Calu3 (cell line): ENCODE measurements at regions of chr19 and their contacts with region 1.

Region 1: DNA sequence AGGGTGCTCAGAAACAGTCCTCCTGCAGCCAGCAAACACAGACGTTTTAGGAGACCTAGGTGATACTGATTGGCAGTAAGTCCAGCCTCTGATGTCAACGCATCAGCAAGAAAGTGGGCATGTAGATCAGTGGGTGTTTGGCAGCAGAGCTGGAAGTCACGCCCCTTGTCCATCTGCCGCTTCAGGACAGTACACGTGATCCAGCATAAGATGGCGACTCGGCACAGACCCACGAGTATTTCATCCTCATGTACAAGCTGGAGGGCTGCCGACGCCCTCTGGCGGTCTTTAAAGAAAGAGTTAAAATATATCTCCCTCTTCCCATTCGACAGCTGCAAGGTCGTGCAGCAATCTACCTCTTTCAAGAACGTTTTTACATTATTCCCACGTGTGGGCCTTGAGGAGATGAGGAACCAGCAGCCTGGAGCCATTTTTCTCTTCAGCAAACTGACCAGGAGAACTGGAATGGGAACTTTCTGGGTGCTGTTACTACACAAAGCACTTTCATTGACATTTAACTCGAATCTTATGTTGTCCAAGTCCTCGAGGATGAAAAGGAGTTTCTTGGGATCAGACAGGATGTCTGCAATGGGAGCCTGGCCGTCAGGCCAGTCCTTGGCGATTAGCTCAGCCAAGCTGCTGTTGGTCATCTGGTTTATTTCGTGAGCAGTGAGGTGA is 22.3 kb downstream of the NLRP11 start:
- DNase-seq: peak; percentile 56
- H3K4me3 Mint-ChIP-seq: no peak overlapping the region
- H3K27ac Mint-ChIP-seq: no peak overlapping the region
- H3K4me1 Mint-ChIP-seq: no peaks in the 10 kb centered on the region
- H3K27me3 Mint-ChIP-seq: peaks cover 9% of the 10 kb centered on the region
- CTCF ChIP-seq: no peak

Region 2: DNA sequence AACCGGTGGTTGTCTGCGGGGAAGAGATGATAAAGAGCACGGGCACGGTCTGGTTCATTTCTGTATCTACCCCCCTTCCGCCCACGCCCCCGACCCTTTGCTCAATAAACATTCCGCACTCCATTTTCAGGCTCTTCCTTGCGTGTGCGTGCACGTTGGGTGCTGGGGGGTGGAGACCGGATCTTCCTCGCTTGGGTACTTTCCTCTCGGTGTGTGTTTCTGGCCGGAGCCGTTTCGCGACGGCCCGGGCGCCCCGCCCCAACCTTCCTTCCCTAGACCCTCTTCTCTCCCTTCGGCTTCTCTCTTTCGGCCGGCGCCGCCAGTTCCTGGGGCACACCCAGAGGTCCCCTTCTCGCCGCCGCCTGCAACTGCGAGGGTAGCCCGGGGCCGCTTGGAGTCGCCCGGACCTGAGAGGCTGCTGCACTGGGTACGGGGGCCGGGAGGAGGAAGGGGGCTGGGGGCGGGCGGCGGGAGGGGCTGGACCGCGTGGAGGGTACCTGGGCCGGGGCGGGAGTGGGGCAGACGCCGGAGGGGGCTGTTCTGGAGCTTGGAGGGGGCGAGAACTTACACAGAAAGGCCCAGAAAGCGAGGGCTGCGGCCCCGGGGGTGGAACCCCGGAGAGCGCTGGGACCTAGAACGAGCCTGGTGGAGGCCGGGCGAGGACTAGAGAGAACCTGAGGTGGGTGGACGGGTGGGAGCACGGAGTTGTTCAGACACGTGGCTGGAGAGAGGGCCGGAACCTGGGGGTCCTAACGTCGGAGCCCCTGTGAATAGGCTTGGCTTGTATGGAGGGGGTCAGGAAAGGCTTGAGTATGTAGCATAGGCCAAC is 166.0 kb before region 1 on chr19 and contains the start of gene ZNF581:
- CTCF ChIA-PET with region 1: no interaction called
- intact Hi-C with region 1: no loop called
- DNase-seq: peak; percentile 85
- H3K4me3 Mint-ChIP-seq: peak within 1 kb of the TSS; percentile 92
- H3K27ac Mint-ChIP-seq: peak within 1 kb of the TSS; percentile 73
- H3K4me1 Mint-ChIP-seq: peaks cover 34% of the 10 kb centered on the region
- H3K27me3 Mint-ChIP-seq: no peaks in the 10 kb centered on the region
- CTCF ChIP-seq: no peak
- total RNA-seq, gene ZNF581: 33.0 and 33.1 TPM in 2 replicates

Region 3: GRCh38 chr19:55653758-55654539 is 155.6 kb before region 1 on chr19:
- CTCF ChIA-PET with region 1: interaction called, 3 read pairs
- intact Hi-C with region 1: loop called (anchors 10 kb)
- DNase-seq: peak; percentile 99
- H3K4me3 Mint-ChIP-seq: peak overlapping the region; percentile 96
- H3K27ac Mint-ChIP-seq: peak overlapping the region; percentile 96
- H3K4me1 Mint-ChIP-seq: peaks cover 10% of the 10 kb centered on the region
- H3K27me3 Mint-ChIP-seq: no peaks in the 10 kb centered on the region
- CTCF ChIP-seq: peak; percentile 100

Region 4: GRCh38 chr19:55688422-55689246 is 120.9 kb before region 1 on chr19:
- CTCF ChIA-PET with region 1: no interaction called
- intact Hi-C with region 1: loop called (anchors 10 kb)
- DNase-seq: no peak
- H3K4me3 Mint-ChIP-seq: no peak overlapping the region
- H3K27ac Mint-ChIP-seq: no peak overlapping the region
- H3K4me1 Mint-ChIP-seq: peaks cover 44% of the 10 kb centered on the region
- H3K27me3 Mint-ChIP-seq: no peaks in the 10 kb centered on the region
- CTCF ChIP-seq: no peak

Region 5: GRCh38 chr19:55795021-55795420 is 14.5 kb before region 1 on chr19:
- CTCF ChIA-PET with region 1: no interaction called
- intact Hi-C with region 1: no loop called
- DNase-seq: no peak
- H3K4me3 Mint-ChIP-seq: no peak overlapping the region
- H3K27ac Mint-ChIP-seq: no peak overlapping the region
- H3K4me1 Mint-ChIP-seq: no peaks in the 10 kb centered on the region
- H3K27me3 Mint-ChIP-seq: no peaks in the 10 kb centered on the region
- CTCF ChIP-seq: no peak

Region 6: GRCh38 chr19:55857149-55857548 is 47.6 kb after region 1 on chr19:
- CTCF ChIA-PET with region 1: no interaction called
- intact Hi-C with region 1: no loop called
- DNase-seq: no peak
- H3K4me3 Mint-ChIP-seq: no peak overlapping the region
- H3K27ac Mint-ChIP-seq: no peak overlapping the region
- H3K4me1 Mint-ChIP-seq: no peaks in the 10 kb centered on the region
- H3K27me3 Mint-ChIP-seq: no peaks in the 10 kb centered on the region
- CTCF ChIP-seq: no peak

Region 7: GRCh38 chr19:55930996-55931515 is 121.5 kb after region 1 on chr19:
- CTCF ChIA-PET with region 1: no interaction called
- intact Hi-C with region 1: no loop called
- DNase-seq: no peak
- H3K4me3 Mint-ChIP-seq: no peak overlapping the region
- H3K27ac Mint-ChIP-seq: no peak overlapping the region
- H3K4me1 Mint-ChIP-seq: no peaks in the 10 kb centered on the region
- H3K27me3 Mint-ChIP-seq: no peaks in the 10 kb centered on the region
- CTCF ChIP-seq: no peak